ENCODE measurements at regions of chr15 and their contacts with region 1.

Region 1: DNA sequence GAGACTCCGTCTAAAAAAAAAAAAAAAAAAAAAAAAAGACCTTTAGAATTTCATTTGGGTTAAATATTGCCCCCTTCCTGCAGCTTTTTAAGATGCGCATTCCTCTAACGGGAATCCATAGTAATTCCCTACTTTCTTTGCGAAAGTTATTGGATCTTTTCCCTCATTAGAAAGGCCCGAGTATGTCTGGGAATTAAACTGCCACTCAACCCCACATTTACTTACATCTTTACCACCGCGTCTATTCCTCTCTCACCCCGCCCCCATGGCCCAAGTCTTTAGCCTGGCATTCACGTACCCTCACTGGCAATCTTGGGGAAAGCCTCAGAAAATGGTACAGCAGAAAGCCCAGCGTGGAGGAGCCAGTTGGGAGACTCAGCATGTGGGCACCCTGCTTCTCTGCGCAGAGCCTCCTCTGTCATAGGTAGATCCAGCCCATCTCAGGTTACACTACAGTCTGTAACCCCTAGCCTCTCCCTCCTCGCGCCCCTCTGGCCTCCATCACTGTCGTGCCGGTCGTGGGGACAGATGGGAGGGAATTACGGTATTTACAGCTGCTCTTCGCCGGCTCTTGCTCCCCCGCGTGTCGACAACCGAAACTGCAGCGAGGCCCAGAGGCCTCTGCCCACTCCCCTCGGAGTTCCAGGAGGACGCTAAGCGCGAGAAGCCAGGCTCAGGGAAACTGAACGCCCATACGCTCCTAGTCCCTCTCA is 6.4 kb upstream of the ANKDD1A start:
- DNase-seq: peak; percentile 86
- H3K4me3 ChIP-seq: peak overlapping the region; percentile 65
- H3K27ac ChIP-seq: 0 out of 2 replicates have a peak overlapping the region, but pooled peaks have one; percentile 5
- H3K4me1 ChIP-seq: no peaks in the 10 kb centered on the region
- H3K27me3 ChIP-seq: no peaks in the 10 kb centered on the region

Region 2: GRCh38 chr15:64731012-64731806 is 174.1 kb before region 1 on chr15:
- in situ Hi-C with region 1: loop called (anchors 10 kb)
- DNase-seq: peak; percentile 83
- H3K4me3 ChIP-seq: no peak overlapping the region
- H3K27ac ChIP-seq: no peak overlapping the region
- H3K4me1 ChIP-seq: 0 out of 2 replicates have a peak, but pooled peaks cover 4% of the 10 kb centered on the region
- H3K27me3 ChIP-seq: no peaks in the 10 kb centered on the region